Naive thymus-derived CD8-positive, alpha-beta T cell (primary cell): ENCODE measurements at regions of chr2 and their contacts with region 1.

Region 1: DNA sequence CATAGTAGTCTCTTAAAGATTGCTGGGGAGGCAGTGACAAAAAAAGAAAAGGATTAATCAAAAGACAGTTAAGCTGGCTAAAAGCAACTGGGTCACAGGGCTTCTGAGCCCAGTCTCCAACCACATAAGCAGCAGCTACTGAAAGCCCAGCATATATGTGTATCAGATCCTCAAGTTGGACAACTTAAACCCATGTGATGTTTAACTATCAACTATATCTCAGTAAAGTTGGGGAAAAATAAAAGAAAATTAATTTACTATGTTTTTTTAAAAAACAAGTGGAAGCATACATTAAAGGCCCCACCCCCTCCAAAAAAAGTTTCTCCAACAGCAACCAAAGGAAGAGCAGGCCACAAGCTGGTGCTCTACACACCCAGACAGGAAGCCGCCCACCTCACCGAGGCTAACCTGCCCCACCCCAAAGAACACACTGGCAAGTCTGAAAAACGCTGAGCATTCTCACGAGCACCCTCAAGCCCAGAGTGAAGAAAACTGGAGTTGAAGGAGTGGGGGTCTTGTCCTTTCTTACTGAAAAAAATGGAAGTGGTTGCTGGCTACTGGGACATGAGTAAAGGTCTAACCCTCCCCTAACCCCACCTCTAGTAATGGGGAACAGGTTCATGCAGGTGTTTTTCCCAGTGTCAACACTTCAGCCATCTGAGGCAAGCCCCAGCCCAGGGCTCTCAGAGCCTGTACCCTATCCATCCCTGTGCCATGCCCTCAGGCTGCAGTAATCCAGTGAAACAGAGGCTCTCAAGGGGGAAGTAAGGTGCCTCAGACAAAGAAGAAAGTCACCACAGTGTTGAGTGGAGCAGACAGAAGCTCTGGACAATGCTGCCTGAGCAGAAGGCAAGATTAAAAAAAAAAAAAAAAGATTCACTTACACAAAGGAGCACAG is 106.3 kb downstream of the GYPC start:
- DNase-seq: peak; percentile 26 to 80 (median 52)
- ATAC-seq: peak; percentile 94 to 96
- H3K4me3 Mint-ChIP-seq: peak overlapping the region; percentile 61 to 87 (median 76)
- H3K27ac Mint-ChIP-seq: peak overlapping the region; percentile 82 to 97 (median 94)
- H3K4me1 Mint-ChIP-seq: peaks cover 33 to 94% (median 83%) of the 10 kb centered on the region in 4 donors
- H3K27me3 Mint-ChIP-seq: no peaks in the 10 kb centered on the region

Region 2: DNA sequence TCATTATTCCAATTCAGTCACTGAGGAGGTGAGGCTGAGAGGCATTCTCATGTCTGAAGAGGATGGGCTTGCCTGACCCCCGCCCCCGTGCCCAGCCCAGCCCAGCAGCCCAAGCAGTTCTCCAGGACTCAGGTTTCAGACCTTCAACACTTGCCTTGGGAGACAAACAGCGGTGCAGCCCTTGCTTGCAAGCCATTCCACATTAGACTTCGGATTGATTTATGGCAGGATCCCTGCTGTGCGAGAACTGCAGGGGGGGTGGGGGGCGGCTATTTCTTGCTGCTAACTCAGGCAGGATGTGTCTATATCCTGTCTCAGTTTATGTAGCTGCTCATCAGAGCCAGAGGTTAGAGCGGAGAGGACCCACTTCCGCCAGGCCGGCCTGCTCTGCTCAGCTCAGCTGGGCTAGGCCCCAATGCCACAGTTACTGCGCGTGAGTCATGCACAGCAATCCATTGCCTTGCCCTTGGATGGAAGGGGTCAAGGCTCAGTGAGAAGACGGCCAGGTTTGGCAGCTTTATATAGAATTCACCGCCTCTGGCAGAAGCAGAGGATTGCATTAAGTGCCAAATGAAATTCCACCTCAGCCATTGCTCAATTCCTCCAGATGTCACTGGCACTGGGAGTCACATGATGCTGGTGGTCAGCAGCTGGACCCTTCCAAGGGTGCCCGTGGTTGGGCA is 104.5 kb before region 1 on chr2:
- POLR2A ChIA-PET with region 1: interaction called, 27 read pairs
- DNase-seq: peak in 9 of 10 donors; percentile 37 to 85 (median 75)
- ATAC-seq: peak; percentile 64 to 68
- H3K4me3 Mint-ChIP-seq: peak overlapping the region; percentile 93 to 100 (median 96)
- H3K27ac Mint-ChIP-seq: peak overlapping the region; percentile 91 to 100 (median 98)
- H3K4me1 Mint-ChIP-seq: peaks cover 39 to 74% (median 71%) of the 10 kb centered on the region in 4 donors
- H3K27me3 Mint-ChIP-seq: no peaks in the 10 kb centered on the region

Region 3: GRCh38 chr2:126809340-126809739 is 47.1 kb after region 1 on chr2:
- POLR2A ChIA-PET with region 1: no interaction called
- DNase-seq: no peak
- ATAC-seq: no peak
- H3K4me3 Mint-ChIP-seq: no peak overlapping the region
- H3K27ac Mint-ChIP-seq: no peak overlapping the region
- H3K4me1 Mint-ChIP-seq: no peaks in the 10 kb centered on the region
- H3K27me3 Mint-ChIP-seq: peaks cover 0 to 16% (median 2%) of the 10 kb centered on the region in 5 donors